Gastrocnemius medialis (tissue), 4 donors: ENCODE measurements at regions of chr11 and their contacts with region 1.

Region 1: DNA sequence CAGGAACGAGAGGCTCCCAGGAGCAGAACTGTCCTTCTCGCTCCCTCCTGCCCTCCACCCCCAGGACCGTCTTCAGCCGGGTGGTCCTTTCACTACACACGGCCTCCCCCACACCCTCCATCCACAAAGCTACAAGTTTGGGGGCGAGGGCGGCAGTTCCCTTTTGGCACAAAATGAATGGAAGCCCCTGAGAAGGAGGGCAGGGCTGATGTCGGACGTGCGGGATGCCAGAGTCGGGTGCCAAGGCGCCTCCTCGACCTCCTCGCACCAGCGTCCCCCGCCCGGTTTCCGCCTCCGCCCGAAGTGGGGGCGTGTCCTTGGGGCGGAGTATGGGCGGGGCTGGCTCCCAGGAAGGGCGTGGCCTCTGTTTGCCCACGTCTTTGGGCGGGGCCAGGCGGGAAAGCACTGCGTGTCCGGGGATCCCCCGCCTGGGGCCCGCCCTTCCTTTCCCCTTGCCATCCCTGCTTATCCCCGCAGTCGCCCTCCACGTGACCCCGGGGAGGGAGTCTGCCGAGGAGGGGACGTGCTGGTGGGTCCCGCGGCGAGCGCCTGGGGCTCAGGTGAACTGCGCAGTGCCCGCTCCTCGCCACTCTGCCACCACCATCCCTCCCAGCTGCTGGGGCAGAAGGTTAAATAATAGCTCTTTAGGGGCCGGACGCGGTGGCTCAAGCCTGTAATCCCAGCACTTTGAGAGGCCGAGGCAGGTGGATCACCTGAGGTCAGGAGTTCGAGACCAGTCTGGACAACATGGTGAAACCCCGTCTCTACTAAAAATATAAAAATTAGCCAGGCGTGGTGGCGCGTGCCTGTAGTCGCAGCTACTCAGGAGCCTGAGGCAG is 937 bp upstream of the EFEMP2 start:
- DNase-seq: peak; percentile 85 to 91
- ATAC-seq: peak; percentile 84 to 89
- H3K4me3 ChIP-seq: peak overlapping the region; percentile 54 to 63 (median 60)
- H3K27ac ChIP-seq: peak overlapping the region; percentile 80 to 87 (median 82)
- H3K4me1 ChIP-seq: peaks cover 0 to 19% of the 10 kb centered on the region in 2 donors
- H3K27me3 ChIP-seq: no peaks in the 10 kb centered on the region
- CTCF ChIP-seq: no peak
- POLR2A ChIP-seq: peak; percentile 76 to 82

Region 2: DNA sequence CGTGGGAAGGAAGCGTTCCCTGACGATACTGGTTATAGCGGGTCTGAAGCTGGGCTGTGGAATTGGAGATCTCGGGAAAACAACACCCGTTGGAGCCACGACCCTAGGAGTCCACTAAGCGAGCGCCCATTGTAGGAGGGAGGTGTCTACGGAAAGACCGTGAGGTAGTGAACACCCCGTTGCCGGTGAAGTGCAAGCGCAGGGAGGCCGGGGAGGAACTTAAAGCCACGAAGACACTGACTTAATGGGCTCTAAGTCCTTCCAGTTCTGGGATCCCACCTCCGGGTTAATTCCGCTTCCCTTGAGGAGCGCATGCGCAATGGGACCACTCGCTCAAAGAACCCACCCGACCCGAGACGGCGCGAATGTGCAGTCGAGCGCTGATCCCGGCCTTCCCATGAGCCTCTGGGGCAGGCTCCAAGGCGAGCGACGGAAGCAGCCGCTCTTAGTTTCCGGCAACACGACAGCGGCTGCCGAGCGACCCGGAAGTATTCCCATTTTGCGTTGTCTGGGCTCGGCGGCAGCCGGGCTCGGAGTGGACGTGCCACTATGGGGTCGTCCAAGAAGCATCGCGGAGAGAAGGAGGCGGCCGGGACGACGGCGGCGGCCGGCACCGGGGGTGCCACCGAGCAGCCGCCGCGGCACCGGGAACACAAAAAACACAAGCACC is 87.8 kb after region 1 on chr11 and contains the start of gene SART1:
- in situ Hi-C with region 1: no loop called
- intact Hi-C with region 1: loop called (anchors 1 kb)
- DNase-seq: peak; percentile 97 to 98
- ATAC-seq: peak; percentile 97 to 98
- H3K4me3 ChIP-seq: peak within 1 kb of the TSS; percentile 69 to 100 (median 88)
- H3K27ac ChIP-seq: peak within 1 kb of the TSS; percentile 81 to 96 (median 90)
- H3K4me1 ChIP-seq: peaks cover 16 to 24% of the 10 kb centered on the region in 2 donors
- H3K27me3 ChIP-seq: no peaks in the 10 kb centered on the region
- CTCF ChIP-seq: peak in 1 of 5 experiments; percentile 14
- POLR2A ChIP-seq: peak; percentile 61 to 81
- total RNA-seq, gene SART1: 12.0 to 55.2 (median 33.3) TPM